ENCODE measurements at regions of chr12 and their contacts with region 1.

Region 1: DNA sequence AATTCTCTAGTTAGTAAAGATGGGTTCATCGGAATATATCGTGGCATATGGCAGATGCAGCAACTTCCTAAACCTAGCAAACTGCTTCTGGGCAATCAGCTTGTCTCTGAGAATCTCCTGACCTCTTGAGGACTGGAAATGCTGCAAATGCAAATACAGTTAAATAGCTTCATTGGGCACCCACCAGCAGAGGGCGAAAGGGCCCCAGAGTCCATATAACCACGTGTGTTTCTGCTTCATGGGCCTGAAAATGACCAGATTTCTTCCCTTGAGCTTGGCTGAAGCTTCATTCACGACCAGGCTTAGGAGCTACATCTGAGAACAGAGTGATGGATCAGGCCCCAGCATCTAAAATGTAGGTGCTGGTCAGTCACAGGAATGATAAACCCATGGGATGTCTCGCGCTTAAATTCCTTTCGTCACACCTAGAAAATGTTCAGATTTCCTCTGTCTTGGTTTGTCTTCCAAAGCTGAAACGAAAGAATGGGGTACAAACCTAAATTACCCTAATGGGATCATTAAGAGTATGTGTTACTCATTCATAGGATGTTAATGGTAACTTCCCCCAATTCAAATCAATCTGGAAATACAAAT is 1482.5 kb upstream of the TMEM132C start:
- DNase-seq: peak; percentile 48
- ATAC-seq: no peak
- H3K4me3 Mint-ChIP-seq: no peak overlapping the region
- H3K27ac Mint-ChIP-seq: no peak overlapping the region
- H3K4me1 Mint-ChIP-seq: no peaks in the 10 kb centered on the region
- H3K27me3 Mint-ChIP-seq: peaks cover 1% of the 10 kb centered on the region
- CTCF ChIP-seq: peak; percentile 23

Region 2: DNA sequence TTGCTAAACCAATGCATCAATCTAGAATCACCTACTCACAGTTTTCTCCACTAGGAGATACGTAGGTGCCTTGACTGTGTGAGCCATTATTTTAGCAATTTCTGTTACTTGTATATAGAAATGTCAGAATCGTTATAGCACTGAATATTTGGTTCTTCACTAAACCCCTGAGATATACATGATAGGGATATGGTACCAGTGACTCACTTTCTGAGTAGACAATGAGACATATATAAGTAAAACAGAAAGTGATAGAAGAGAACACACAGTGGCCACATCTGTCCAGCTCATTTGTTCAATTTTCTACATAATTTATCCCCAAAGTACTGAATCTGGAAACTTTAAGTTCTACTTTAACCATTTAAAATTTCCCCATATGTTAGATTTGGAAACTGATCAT is 23.0 kb before region 1 on chr12:
- CTCF ChIA-PET with region 1: no interaction called
- POLR2A ChIA-PET with region 1: no interaction called
- intact Hi-C with region 1: no loop called
- DNase-seq: no peak
- ATAC-seq: peak; percentile 80
- H3K4me3 Mint-ChIP-seq: no peak overlapping the region
- H3K27ac Mint-ChIP-seq: peak overlapping the region; percentile 56
- H3K4me1 Mint-ChIP-seq: peaks cover 3% of the 10 kb centered on the region
- H3K27me3 Mint-ChIP-seq: no peaks in the 10 kb centered on the region
- CTCF ChIP-seq: no peak

Region 3: GRCh38 chr12:126874427-126875026 is 90.1 kb after region 1 on chr12:
- CTCF ChIA-PET with region 1: interaction called, 23 read pairs
- POLR2A ChIA-PET with region 1: no interaction called
- intact Hi-C with region 1: no loop called
- DNase-seq: peak; percentile 67
- ATAC-seq: peak; percentile 66
- H3K4me3 Mint-ChIP-seq: no peak overlapping the region
- H3K27ac Mint-ChIP-seq: no peak overlapping the region
- H3K4me1 Mint-ChIP-seq: no peaks in the 10 kb centered on the region
- H3K27me3 Mint-ChIP-seq: peaks cover 4% of the 10 kb centered on the region
- CTCF ChIP-seq: peak; percentile 88

Measured in activated CD8-positive, alpha-beta T cell treated with anti-CD3 and anti-CD28 coated beads for 36 hours (primary cell).